ENCODE measurements at regions of chr12 and their contacts with region 1.

Region 1: DNA sequence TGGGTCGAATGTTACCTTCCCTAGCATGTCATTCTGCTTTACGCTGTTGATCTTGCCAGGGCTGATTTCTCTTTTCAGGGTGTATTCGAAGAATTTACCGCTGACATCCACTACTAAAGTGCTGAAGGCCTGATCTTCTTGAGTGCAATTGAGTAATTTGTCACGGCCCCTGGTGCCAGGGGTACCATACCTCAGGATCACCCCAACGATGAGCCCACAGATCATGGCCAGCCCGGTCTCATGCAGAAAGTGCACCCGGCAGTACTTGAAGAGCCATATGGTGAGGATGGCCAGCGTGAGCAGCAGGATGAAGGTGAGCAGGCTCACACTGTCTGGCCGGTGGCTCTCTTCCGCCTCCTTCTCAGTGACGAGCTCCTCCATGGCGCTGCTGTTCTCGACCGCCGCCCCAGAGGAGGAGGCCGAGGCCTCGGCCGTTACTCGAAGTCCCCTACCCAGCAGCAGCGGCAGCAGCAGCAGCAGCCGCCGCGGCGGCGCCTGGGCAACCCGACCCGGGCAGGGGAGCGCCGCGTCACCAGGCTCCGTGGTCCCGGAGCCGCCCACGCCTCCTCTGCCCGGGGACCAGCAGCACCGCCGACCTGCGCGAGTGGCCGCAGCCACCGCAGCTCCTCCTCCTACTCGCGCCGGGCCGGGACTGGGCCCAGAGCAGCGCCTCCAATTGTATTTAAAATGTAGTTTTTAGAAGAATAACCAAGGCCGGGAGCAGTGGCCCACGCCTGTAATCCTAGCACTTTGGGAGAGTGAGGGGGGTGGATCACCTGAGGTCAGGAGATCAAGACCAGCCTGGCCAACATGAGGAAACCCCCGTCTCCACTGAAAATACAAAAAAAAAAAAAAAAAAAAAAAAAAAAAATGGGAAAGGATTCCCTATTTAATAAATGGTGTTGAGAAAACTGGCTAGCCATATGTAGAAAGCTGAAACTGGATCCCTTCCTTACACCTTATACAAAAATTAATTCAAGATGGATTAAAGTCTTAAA is 58.5 kb upstream of the TMPO start:
- DNase-seq: peak in 15 of 35 experiments; percentile 1 to 35 (median 4)
- ATAC-seq: peak in 3 of 4 experiments; percentile 46 to 49 (median 46)
- H3K4me3 ChIP-seq: peak overlapping the region in 1 of 2 donors; percentile 40
- H3K4me3 Mint-ChIP-seq: peak overlapping the region; percentile 15 to 69 (median 62)
- H3K27ac ChIP-seq: no peak overlapping the region
- H3K27ac Mint-ChIP-seq: no peak overlapping the region
- H3K4me1 ChIP-seq: peaks cover 0 to 7% of the 10 kb centered on the region in 2 experiments
- H3K4me1 Mint-ChIP-seq: peaks cover 7 to 9% (median 8%) of the 10 kb centered on the region in 3 donors
- H3K27me3 ChIP-seq: peaks cover 5 to 32% of the 10 kb centered on the region in 2 experiments
- H3K27me3 Mint-ChIP-seq: peaks cover 24 to 31% of the 10 kb centered on the region in 2 donors

Region 2: GRCh38 chr12:98671459-98671858 is 214.6 kb after region 1 on chr12:
- CTCF ChIA-PET with region 1: no interaction called
- POLR2A ChIA-PET with region 1: no interaction called
- DNase-seq: no peak
- ATAC-seq: no peak
- H3K4me3 ChIP-seq: no peak overlapping the region
- H3K4me3 Mint-ChIP-seq: no peak overlapping the region
- H3K27ac ChIP-seq: no peak overlapping the region
- H3K27ac Mint-ChIP-seq: peak overlapping the region in 1 of 2 donors; percentile 28
- H3K4me1 ChIP-seq: peaks cover 0 to 3% of the 10 kb centered on the region in 2 experiments
- H3K4me1 Mint-ChIP-seq: peaks cover 13 to 22% (median 18%) of the 10 kb centered on the region in 3 donors
- H3K27me3 ChIP-seq: no peaks in the 10 kb centered on the region
- H3K27me3 Mint-ChIP-seq: no peaks in the 10 kb centered on the region

Region 3: GRCh38 chr12:98691351-98691750 is 234.5 kb after region 1 on chr12:
- CTCF ChIA-PET with region 1: no interaction called
- POLR2A ChIA-PET with region 1: interaction called in 1 of 2 experiments, 13 read pairs
- DNase-seq: no peak
- ATAC-seq: no peak
- H3K4me3 ChIP-seq: no peak overlapping the region
- H3K4me3 Mint-ChIP-seq: no peak overlapping the region
- H3K27ac ChIP-seq: no peak overlapping the region
- H3K27ac Mint-ChIP-seq: peak overlapping the region in 1 of 2 donors; percentile 58
- H3K4me1 ChIP-seq: no peaks in the 10 kb centered on the region
- H3K4me1 Mint-ChIP-seq: peaks cover 9 to 21% (median 16%) of the 10 kb centered on the region in 3 donors
- H3K27me3 ChIP-seq: no peaks in the 10 kb centered on the region
- H3K27me3 Mint-ChIP-seq: no peaks in the 10 kb centered on the region

Region 4: GRCh38 chr12:99111600-99111999 is 654.7 kb after region 1 on chr12:
- CTCF ChIA-PET with region 1: no interaction called
- POLR2A ChIA-PET with region 1: no interaction called
- DNase-seq: no peak
- ATAC-seq: no peak
- H3K4me3 ChIP-seq: no peak overlapping the region
- H3K4me3 Mint-ChIP-seq: no peak overlapping the region
- H3K27ac ChIP-seq: no peak overlapping the region
- H3K27ac Mint-ChIP-seq: no peak overlapping the region
- H3K4me1 ChIP-seq: no peaks in the 10 kb centered on the region
- H3K4me1 Mint-ChIP-seq: no peaks in the 10 kb centered on the region
- H3K27me3 ChIP-seq: no peaks in the 10 kb centered on the region
- H3K27me3 Mint-ChIP-seq: no peaks in the 10 kb centered on the region